ENCODE measurements at regions of chr12 and their contacts with region 1.

Region 1: DNA sequence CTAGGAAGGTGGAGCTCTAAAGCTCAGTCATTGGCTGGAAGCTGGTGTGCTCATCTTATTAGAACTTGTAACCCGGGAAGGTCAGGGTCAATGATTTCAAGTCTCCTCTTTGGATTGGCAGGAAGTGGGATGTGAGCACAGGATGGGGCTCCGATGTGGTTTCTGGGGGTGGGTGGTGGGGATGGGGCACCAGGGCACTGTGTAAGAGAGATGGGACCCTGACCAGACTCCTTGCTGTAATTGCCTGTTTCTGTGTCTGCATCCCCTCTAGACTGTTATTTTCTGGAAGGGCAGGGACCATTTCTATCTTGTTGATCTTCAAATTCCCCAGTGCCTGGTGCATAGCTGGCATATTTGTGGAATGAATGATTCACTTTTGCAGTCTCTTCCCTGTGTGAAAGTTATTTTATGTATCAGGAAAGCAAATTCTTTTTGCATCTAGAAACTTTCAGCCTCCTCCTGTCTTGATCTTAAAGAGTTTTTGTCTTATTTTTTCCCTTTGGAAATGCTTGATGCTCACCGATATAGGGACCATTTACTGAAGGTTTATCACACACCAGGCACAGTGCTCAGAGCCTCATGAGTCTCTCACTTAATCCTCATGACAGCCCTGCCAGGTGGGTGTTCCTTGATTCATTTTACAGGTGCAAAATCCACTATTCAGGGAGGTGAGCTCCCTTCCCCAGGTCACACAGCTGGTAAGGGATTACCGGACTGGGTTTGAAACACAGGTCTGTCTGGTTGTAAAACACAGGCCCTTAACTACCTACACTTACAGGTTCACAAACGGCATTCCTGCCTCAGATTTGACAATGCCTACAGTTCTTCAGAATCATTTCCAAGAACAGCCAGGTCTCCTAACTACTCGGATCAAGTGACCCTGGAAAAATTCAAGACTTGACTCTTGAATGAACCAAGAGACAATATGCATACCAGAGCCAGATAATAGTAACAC is 86.9 kb upstream of the IGF1 start:
- DNase-seq: peak; percentile 47 to 92
- H3K4me3 ChIP-seq: peak overlapping the region; percentile 29; the same call in 1 of the 2 replicates
- H3K27ac ChIP-seq: peak overlapping the region; percentile 96
- H3K4me1 ChIP-seq: peaks cover 68% of the 10 kb centered on the region
- H3K27me3 ChIP-seq: no peaks in the 10 kb centered on the region
- CTCF ChIP-seq: no peak

Region 2: DNA sequence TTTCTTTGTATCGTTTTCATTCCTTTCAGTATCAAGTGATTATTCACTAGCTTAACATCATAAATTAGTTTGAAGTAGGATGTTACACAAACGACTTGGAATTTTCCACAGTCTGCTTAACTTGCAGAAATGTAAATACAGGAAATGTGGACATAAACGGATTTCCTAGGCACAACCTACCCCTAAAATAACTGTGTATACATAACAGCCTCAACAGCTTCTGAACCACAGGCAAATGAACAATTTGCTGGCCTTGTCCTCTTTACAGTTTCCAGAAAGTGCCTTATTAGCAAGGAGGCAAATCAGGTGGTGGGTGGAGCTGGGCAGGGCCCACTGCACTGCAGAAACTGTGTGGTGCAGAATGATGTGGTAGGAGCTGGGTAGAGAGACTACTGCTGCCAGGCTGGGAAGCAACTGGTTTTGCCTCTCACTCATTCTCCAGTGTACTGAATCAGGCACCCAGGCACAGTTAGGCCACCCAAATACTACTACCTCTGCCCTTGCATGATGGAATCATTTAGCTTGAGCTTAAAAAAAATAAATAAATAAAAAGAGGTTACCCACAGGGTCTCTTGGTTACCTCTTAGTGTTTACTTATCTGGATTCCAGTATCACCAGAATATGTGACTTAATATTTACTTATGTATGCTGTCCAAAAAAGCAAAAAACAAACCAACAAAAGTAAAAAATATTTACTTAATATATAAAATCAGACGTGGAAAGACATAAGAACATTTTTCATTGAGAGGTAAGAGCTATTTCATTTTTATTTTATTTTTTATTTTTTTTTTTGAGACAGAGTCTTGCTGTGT is 675.6 kb before region 1 on chr12:
- CTCF ChIA-PET with region 1: no interaction called
- POLR2A ChIA-PET with region 1: no interaction called
- intact Hi-C with region 1: loop called (anchors 10 kb)
- DNase-seq: peak; percentile 10 to 61
- H3K4me3 ChIP-seq: 0 out of 2 replicates have a peak overlapping the region, but pooled peaks have one; percentile 6
- H3K27ac ChIP-seq: peak overlapping the region; percentile 67
- H3K4me1 ChIP-seq: peaks cover 42% of the 10 kb centered on the region
- H3K27me3 ChIP-seq: no peaks in the 10 kb centered on the region
- CTCF ChIP-seq: no peak

Region 3: GRCh38 chr12:102484428-102484958 is 82.8 kb before region 1 on chr12:
- CTCF ChIA-PET with region 1: interaction called, 5 read pairs
- POLR2A ChIA-PET with region 1: no interaction called
- intact Hi-C with region 1: loop called (anchors 2 kb)
- DNase-seq: peak in 1 of 2 experiments; percentile 21
- H3K4me3 ChIP-seq: no peak overlapping the region
- H3K27ac ChIP-seq: no peak overlapping the region
- H3K4me1 ChIP-seq: 0 out of 2 replicates have a peak, but pooled peaks cover 4% of the 10 kb centered on the region
- H3K27me3 ChIP-seq: no peaks in the 10 kb centered on the region
- CTCF ChIP-seq: peak; percentile 95

Region 4: DNA sequence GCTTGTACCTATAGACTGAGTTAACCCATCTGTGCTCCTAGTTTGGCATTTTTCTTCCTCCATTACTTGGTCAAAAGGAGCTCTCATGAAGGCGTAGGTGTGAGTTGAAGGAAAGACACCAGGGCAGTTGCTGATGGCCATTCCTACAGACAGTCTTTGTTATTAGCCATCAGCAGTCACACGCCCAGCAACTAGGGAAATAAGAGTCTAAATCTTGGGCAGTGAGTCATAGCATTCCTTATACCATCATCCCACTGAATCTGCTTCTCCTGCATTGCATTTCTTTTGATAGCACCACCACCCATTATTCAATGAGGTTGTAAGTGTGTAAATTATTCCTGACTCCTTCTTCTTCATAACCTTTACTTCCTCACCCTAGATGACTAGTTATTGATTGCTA is 64.0 kb after region 1 on chr12:
- CTCF ChIA-PET with region 1: no interaction called
- POLR2A ChIA-PET with region 1: no interaction called
- intact Hi-C with region 1: loop called (anchors 5 kb)
- DNase-seq: peak; percentile 33 to 69
- H3K4me3 ChIP-seq: no peak overlapping the region
- H3K27ac ChIP-seq: no peak overlapping the region; the same call in 1 of the 2 replicates
- H3K4me1 ChIP-seq: peaks cover 11% of the 10 kb centered on the region
- H3K27me3 ChIP-seq: no peaks in the 10 kb centered on the region
- CTCF ChIP-seq: no peak

Region 5: GRCh38 chr12:102690253-102690652 is 122.9 kb after region 1 on chr12:
- CTCF ChIA-PET with region 1: no interaction called
- POLR2A ChIA-PET with region 1: no interaction called
- intact Hi-C with region 1: loop called (anchors 1 kb)
- DNase-seq: peak in 1 of 2 experiments; percentile 52
- H3K4me3 ChIP-seq: no peak overlapping the region
- H3K27ac ChIP-seq: no peak overlapping the region
- H3K4me1 ChIP-seq: peaks cover 28% of the 10 kb centered on the region
- H3K27me3 ChIP-seq: no peaks in the 10 kb centered on the region
- CTCF ChIP-seq: no peak

Region 6: GRCh38 chr12:102757154-102757881 is 190.0 kb after region 1 on chr12:
- CTCF ChIA-PET with region 1: no interaction called
- POLR2A ChIA-PET with region 1: no interaction called
- intact Hi-C with region 1: no loop called
- DNase-seq: no peak
- H3K4me3 ChIP-seq: no peak overlapping the region
- H3K27ac ChIP-seq: no peak overlapping the region
- H3K4me1 ChIP-seq: no peaks in the 10 kb centered on the region
- H3K27me3 ChIP-seq: peaks cover 8% of the 10 kb centered on the region; the same call in 1 of the 2 replicates
- CTCF ChIP-seq: no peak